Activated T-helper 1 cell treated with anti-CD3 and anti-CD28 coated beads, Interleukin-12 subunit alpha, Interleukin-12 subunit beta, Interleukin-2, Interleukin-4 antibody, amounts not matched to agents 30 ng/mL and 10 ng/mL and 1 ng/mL, durations not matched to agents 14 hours and 24 hours and 36 hours (primary cell): ENCODE measurements at regions of chr12 and their contacts with region 1.

Region 1: GRCh38 chr12:53159195-53159839 is 21.2 kb upstream of the ZNF740 start:
- DNase-seq: peak; percentile 83
- H3K4me3 Mint-ChIP-seq: no peak overlapping the region
- H3K27ac Mint-ChIP-seq: peak overlapping the region; percentile 50
- H3K4me1 Mint-ChIP-seq: peaks cover 10% of the 10 kb centered on the region
- H3K27me3 Mint-ChIP-seq: no peaks in the 10 kb centered on the region

Region 2: DNA sequence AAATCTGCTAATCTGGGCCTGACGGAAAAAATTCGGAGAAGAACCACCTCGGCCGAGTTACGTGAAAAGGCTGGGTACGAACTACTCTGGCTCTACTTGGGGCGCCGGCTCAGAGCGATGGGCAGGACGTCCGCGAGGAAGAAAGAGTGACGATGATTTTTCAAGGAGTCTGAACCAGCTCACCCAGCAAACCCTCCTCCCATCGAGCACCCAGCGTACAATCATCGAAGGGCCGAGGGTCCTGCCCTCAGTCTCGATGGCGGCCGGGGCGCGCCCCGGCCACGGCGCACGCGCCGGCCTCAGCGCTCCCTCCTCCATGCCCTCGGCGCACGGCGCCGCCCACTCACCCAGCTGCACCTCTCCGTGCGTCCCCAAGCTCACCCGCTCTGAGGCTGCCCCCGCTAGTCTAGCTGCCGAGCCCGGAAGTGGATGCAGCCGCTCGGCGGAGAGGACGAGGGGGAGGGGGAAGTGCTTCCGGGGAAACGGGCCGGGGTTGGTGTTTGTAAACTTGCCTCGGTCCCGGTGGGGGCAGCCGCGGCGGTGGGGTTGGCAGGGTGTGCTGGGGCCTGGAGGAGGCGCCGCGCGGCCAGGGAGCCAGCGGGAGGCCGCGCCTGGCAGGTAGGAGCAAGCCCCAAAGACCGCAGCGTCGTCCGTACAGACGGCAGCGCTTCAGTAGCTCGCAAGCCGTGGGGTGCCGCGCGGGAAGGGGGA is 21.1 kb after region 1 on chr12 and contains the starts of genes CSAD and ZNF740:
- intact Hi-C with region 1: loop called (anchors 1 kb)
- DNase-seq: peak; percentile 97
- H3K4me3 Mint-ChIP-seq: peak within 1 kb of the TSS; percentile 88
- H3K27ac Mint-ChIP-seq: peak within 1 kb of the TSS; percentile 99
- H3K4me1 Mint-ChIP-seq: peaks cover 52% of the 10 kb centered on the region
- H3K27me3 Mint-ChIP-seq: no peaks in the 10 kb centered on the region
- total RNA-seq, gene CSAD: 21.7 and 22.6 TPM in 2 replicates
- total RNA-seq, gene ZNF740: 48.1 and 52.8 TPM in 2 replicates

Region 3: GRCh38 chr12:53200458-53201176 is 41.3 kb after region 1 on chr12:
- intact Hi-C with region 1: loop called (anchors 1 kb)
- DNase-seq: peak; percentile 16
- H3K4me3 Mint-ChIP-seq: peak overlapping the region; percentile 83
- H3K27ac Mint-ChIP-seq: peak overlapping the region; percentile 95
- H3K4me1 Mint-ChIP-seq: peaks cover 67% of the 10 kb centered on the region
- H3K27me3 Mint-ChIP-seq: no peaks in the 10 kb centered on the region

Region 4: DNA sequence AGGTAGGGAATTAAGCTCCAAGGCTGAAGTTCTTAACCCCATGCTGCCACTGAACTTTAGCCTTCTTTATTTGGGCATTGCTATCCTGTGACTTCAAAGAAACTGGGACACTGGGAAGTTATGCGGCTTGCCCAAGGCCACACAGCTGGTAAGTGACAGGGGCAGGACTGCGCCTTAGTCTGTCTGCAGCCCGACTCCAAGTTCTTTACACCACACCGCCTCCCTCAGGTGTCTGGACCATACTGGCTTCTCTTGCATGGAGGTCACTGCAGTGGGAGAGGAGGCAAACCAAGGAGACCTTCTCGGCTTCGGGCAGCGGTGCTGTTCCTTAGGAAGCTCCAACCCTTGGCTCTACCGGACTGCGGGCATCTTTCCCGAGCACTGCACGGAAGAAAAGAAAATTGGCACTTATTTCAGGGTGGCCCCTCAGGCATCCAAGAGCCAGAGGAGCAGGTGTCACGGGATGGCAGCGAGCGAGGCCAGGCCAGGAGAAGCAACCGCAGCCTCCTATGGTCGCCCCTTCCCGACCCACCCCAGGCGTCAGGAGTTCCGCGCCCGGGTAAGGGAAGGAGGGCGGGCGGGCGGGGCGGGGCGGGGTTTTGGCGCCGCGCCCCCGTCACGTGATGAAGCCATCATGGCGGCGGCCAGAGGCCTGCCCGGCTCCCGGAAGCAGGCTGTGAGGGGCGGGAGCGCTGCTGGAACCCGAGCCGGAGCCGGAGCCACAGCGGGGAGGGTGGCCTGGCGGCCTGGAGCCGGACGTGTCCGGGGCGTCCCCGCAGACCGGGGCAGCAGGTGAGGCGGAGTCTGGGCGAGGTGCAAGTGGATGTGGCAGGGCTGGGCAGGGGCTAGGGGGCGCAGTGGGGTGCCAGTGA is 92.4 kb after region 1 on chr12:
- intact Hi-C with region 1: loop called (anchors 1 kb)
- DNase-seq: peak; percentile 69
- H3K4me3 Mint-ChIP-seq: peak overlapping the region; percentile 99
- H3K27ac Mint-ChIP-seq: peak overlapping the region; percentile 88
- H3K4me1 Mint-ChIP-seq: peaks cover 50% of the 10 kb centered on the region
- H3K27me3 Mint-ChIP-seq: peaks cover 2% of the 10 kb centered on the region

Region 5: GRCh38 chr12:53287741-53288216 is 128.5 kb after region 1 on chr12:
- intact Hi-C with region 1: loop called (anchors 1 kb)
- DNase-seq: peak; percentile 51
- H3K4me3 Mint-ChIP-seq: no peak overlapping the region
- H3K27ac Mint-ChIP-seq: peak overlapping the region; percentile 60
- H3K4me1 Mint-ChIP-seq: peaks cover 7% of the 10 kb centered on the region
- H3K27me3 Mint-ChIP-seq: no peaks in the 10 kb centered on the region

Region 6: GRCh38 chr12:53344824-53345485 is 185.6 kb after region 1 on chr12:
- intact Hi-C with region 1: loop called (anchors 1 kb)
- DNase-seq: peak; percentile 41
- H3K4me3 Mint-ChIP-seq: peak overlapping the region; percentile 99
- H3K27ac Mint-ChIP-seq: peak overlapping the region; percentile 96
- H3K4me1 Mint-ChIP-seq: peaks cover 23% of the 10 kb centered on the region
- H3K27me3 Mint-ChIP-seq: peaks cover 12% of the 10 kb centered on the region